Heart right ventricle (tissue), 16 donors: ENCODE measurements at regions of chr1 and their contacts with region 1.

Region 1: DNA sequence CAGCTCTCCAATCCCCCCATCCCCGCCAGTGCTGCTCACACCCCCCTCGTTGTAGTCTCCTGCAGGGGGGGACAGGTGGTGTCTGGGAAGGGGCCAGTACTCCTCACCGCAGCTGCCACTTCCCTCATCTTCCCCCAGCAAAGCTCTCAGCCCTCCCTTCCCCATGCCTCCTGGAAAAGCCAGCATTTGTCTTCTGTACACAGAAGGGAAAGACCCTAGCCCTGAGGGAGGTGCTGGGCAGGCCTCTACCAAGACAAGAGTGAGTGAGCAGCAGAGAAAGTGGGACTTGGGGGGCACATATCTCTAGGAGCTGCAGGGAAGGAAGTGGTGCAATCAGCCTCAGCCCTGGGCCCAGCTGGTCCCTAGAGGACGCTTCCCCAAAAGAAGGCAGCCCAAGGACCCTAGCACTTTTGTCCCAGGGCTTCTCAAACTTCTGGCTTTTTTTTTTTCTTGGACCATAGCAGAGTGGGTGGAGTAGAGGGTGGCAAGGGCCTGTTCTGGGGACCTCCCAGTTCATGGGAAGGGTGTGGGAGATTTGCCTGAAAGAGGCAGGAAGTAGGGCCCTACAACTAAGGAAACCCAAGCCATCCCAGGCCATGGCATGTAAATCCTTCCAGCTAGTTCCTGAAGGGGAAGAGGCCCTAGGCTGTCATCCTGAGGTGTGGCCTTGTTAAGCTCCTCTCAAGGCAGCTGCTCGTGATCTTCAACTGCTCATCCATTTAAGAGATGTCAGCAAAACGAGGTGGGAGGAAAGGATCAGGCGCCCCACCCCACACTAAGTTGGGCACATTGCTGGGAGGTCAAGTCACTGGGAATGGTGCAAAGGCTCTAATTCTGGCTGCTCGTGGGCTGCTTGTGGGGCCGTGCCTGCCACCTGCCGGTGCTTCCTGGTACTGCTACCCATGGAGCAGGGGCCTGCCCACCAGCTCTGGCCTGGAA is 12.6 kb downstream of the ZC3H12A start:
- DNase-seq: peak; percentile 74 to 84
- ATAC-seq: peak; percentile 59 to 84 (median 77)
- H3K4me3 ChIP-seq: no peak overlapping the region
- H3K27ac ChIP-seq: peak overlapping the region; percentile 43 to 79 (median 70)
- H3K4me1 ChIP-seq: peaks cover 18 to 42% (median 34%) of the 10 kb centered on the region in 9 donors
- H3K27me3 ChIP-seq: no peaks in the 10 kb centered on the region
- CTCF ChIP-seq: peak in 8 of 9 donors; percentile 93 to 99 (median 98)

Region 2: DNA sequence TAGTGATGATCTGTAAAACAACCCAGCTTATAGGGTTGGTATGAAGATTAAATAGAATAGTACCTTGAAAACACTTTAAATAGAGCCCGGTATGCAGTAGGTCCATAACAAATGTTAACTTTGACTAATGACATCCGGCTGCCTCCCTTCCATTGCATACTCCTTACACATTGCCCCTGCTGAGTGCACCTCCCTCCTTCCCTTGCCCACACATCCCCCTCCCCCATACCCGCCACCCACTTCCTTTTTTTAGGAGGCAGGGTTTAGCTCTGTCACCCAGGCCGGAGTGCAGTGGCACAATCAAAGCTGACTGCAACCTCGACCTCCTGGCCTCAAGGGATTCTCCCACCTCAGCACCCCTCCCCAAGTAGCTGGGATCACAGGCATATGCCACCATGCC is 37.0 kb before region 1 on chr1:
- intact Hi-C with region 1: loop called in 9 of 10 experiments (anchors 1 to 5 kb)
- DNase-seq: no peak
- ATAC-seq: no peak
- H3K4me3 ChIP-seq: no peak overlapping the region
- H3K27ac ChIP-seq: no peak overlapping the region
- H3K4me1 ChIP-seq: peaks cover 0 to 9% (median 0%) of the 10 kb centered on the region in 9 donors
- H3K27me3 ChIP-seq: peaks cover 0 to 61% (median 31%) of the 10 kb centered on the region in 7 donors
- CTCF ChIP-seq: no peak

Region 3: DNA sequence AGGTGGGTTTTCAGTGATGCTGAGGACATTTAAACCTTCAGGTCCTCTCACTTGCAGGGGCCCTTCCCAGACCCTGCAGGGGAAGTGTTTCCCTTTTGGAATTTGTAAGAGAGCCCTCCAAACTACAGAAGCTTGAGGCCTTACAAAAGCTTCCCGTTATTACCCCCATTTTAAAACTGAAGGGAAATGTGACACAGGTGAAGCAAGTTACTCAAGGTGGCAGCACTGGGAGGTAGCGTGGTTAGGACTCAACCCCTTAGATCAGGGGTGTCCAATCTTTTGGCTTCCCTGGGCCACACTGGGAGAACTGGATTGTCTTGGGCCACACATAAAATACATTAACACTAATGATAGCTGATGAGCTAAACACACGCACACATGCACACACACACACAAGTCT is 28.4 kb before region 1 on chr1:
- intact Hi-C with region 1: loop called in 9 of 10 experiments (anchors 1 to 5 kb)
- DNase-seq: no peak
- ATAC-seq: no peak
- H3K4me3 ChIP-seq: no peak overlapping the region
- H3K27ac ChIP-seq: no peak overlapping the region
- H3K4me1 ChIP-seq: peaks cover 0 to 10% (median 0%) of the 10 kb centered on the region in 9 donors
- H3K27me3 ChIP-seq: no peaks in the 10 kb centered on the region
- CTCF ChIP-seq: no peak